Mammary epithelial cell (primary cell): ENCODE measurements at regions of chr4 and their contacts with region 1.

Region 1: GRCh38 chr4:17066972-17067371 is 168.5 kb upstream of the LDB2 start:
- DNase-seq: peak; percentile 6
- H3K4me3 ChIP-seq: no peak overlapping the region
- H3K27ac ChIP-seq: no peak overlapping the region
- H3K4me1 ChIP-seq: peaks cover 15% of the 10 kb centered on the region
- H3K27me3 ChIP-seq: no peaks in the 10 kb centered on the region
- CTCF ChIP-seq: no peak

Region 2: GRCh38 chr4:16827794-16828724 is 238.9 kb before region 1 on chr4:
- CTCF ChIA-PET with region 1: no interaction called
- dilution Hi-C with region 1: no loop called
- in situ Hi-C with region 1: no loop called
- intact Hi-C with region 1: no loop called
- DNase-seq: no peak
- H3K4me3 ChIP-seq: no peak overlapping the region
- H3K27ac ChIP-seq: no peak overlapping the region
- H3K4me1 ChIP-seq: no peaks in the 10 kb centered on the region
- H3K27me3 ChIP-seq: no peaks in the 10 kb centered on the region
- CTCF ChIP-seq: no peak

Region 3: DNA sequence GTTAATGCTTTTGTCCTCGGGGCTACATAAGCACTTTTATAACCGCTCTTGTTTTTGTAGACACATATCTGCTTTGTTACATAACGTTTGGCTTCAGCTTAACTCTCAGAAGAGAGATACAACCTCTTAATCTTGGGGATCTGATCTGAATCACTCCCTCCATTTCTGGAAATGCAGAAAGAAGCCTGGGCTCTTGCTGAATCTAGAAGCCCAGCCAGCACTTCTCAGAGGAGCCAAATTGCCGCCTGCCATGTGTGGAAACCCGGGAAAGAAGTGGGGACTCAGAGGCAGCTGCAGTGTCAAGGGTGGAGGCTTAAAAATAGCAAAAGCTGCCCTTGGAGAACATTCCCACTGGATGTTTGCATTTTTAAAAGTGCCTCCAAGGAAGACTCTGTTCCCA is 99.2 kb before region 1 on chr4:
- CTCF ChIA-PET with region 1: no interaction called
- dilution Hi-C with region 1: loop called (anchors 5 kb)
- in situ Hi-C with region 1: no loop called
- intact Hi-C with region 1: no loop called
- DNase-seq: no peak
- H3K4me3 ChIP-seq: no peak overlapping the region
- H3K27ac ChIP-seq: no peak overlapping the region
- H3K4me1 ChIP-seq: no peaks in the 10 kb centered on the region
- H3K27me3 ChIP-seq: no peaks in the 10 kb centered on the region
- CTCF ChIP-seq: no peak

Region 4: GRCh38 chr4:17027495-17027894 is 39.5 kb before region 1 on chr4:
- CTCF ChIA-PET with region 1: no interaction called
- dilution Hi-C with region 1: no loop called
- in situ Hi-C with region 1: no loop called
- intact Hi-C with region 1: loop called (anchors 1 kb)
- DNase-seq: peak; percentile 33
- H3K4me3 ChIP-seq: no peak overlapping the region
- H3K27ac ChIP-seq: no peak overlapping the region
- H3K4me1 ChIP-seq: peaks cover 38% of the 10 kb centered on the region
- H3K27me3 ChIP-seq: no peaks in the 10 kb centered on the region
- CTCF ChIP-seq: no peak

Region 5: GRCh38 chr4:17366496-17366895 is 299.5 kb after region 1 on chr4:
- CTCF ChIA-PET with region 1: no interaction called
- dilution Hi-C with region 1: no loop called
- in situ Hi-C with region 1: no loop called
- intact Hi-C with region 1: no loop called
- DNase-seq: no peak
- H3K4me3 ChIP-seq: no peak overlapping the region
- H3K27ac ChIP-seq: no peak overlapping the region
- H3K4me1 ChIP-seq: no peaks in the 10 kb centered on the region
- H3K27me3 ChIP-seq: no peaks in the 10 kb centered on the region
- CTCF ChIP-seq: no peak